Activated naive CD4-positive, alpha-beta T cell treated with anti-CD3 and anti-CD28 coated beads for 36 hours (primary cell): ENCODE measurements at regions of chr1 and their contacts with region 1.

Region 1: GRCh38 chr1:55215256-55216021 is at the start of gene USP24:
- DNase-seq: peak; percentile 81
- H3K4me3 Mint-ChIP-seq: peak within 1 kb of the TSS; percentile 98
- H3K27ac Mint-ChIP-seq: peak within 1 kb of the TSS; percentile 97
- H3K4me1 Mint-ChIP-seq: peaks cover 43% of the 10 kb centered on the region
- H3K27me3 Mint-ChIP-seq: no peaks in the 10 kb centered on the region
- total RNA-seq, gene USP24: 37.1 to 39.7 TPM

Region 2: GRCh38 chr1:54121482-54122134 is 1093.8 kb before region 1 on chr1:
- CTCF ChIA-PET with region 1: no interaction called
- intact Hi-C with region 1: no loop called
- DNase-seq: peak; percentile 81
- H3K4me3 Mint-ChIP-seq: peak overlapping the region; percentile 5
- H3K27ac Mint-ChIP-seq: no peak overlapping the region
- H3K4me1 Mint-ChIP-seq: peaks cover 8% of the 10 kb centered on the region
- H3K27me3 Mint-ChIP-seq: no peaks in the 10 kb centered on the region

Region 3: GRCh38 chr1:55071477-55071876 is 144.0 kb before region 1 on chr1:
- CTCF ChIA-PET with region 1: no interaction called
- intact Hi-C with region 1: loop called (anchors 5 kb)
- DNase-seq: peak; percentile 39
- H3K4me3 Mint-ChIP-seq: no peak overlapping the region
- H3K27ac Mint-ChIP-seq: no peak overlapping the region
- H3K4me1 Mint-ChIP-seq: peaks cover 16% of the 10 kb centered on the region
- H3K27me3 Mint-ChIP-seq: no peaks in the 10 kb centered on the region

Region 4: DNA sequence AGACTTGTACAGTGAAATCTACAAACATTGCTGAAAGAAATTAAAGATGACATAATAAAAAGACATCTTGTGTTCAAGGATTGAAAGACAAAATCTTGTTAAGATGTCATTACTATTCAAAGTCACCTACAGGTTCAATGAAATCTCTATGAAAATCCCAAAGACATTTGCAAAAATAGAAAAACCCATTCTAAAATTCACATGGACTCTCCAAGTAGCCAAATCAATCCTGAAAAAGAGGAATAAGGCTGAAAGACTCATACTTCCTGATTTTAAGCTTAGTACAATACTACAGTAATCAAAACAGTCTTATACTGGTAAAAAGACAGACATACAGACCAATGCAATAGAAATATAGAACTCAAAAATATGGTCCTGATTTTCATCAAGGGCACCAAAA is 97.5 kb before region 1 on chr1:
- CTCF ChIA-PET with region 1: no interaction called
- intact Hi-C with region 1: no loop called
- DNase-seq: no peak
- H3K4me3 Mint-ChIP-seq: no peak overlapping the region
- H3K27ac Mint-ChIP-seq: no peak overlapping the region
- H3K4me1 Mint-ChIP-seq: peaks cover 15% of the 10 kb centered on the region
- H3K27me3 Mint-ChIP-seq: no peaks in the 10 kb centered on the region

Region 5: GRCh38 chr1:55150880-55151588 is 64.4 kb before region 1 on chr1:
- CTCF ChIA-PET with region 1: no interaction called
- intact Hi-C with region 1: loop called (anchors 2 kb)
- DNase-seq: no peak
- H3K4me3 Mint-ChIP-seq: peak overlapping the region; percentile 38
- H3K27ac Mint-ChIP-seq: peak overlapping the region; percentile 92
- H3K4me1 Mint-ChIP-seq: peaks cover 33% of the 10 kb centered on the region
- H3K27me3 Mint-ChIP-seq: no peaks in the 10 kb centered on the region

Region 6: DNA sequence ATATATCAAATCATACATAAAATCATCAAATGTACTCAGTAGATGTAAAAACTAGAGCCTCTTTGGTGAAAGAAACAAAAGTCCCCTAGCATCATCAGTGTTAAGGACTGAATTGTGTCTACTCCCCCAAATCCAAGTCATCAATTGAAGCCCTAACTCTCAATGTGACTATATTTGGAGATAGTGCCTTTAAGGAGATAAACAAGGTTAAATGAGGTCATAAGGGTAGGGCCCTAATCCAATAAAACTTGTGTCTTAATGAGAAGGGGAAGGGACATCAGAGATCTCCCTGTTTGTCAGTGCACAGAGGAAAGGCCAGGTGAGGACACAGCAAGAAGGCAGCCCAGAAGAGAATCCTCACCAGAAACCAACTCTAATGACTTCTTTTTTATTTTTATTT is 33.8 kb before region 1 on chr1:
- CTCF ChIA-PET with region 1: no interaction called
- intact Hi-C with region 1: loop called (anchors 2 kb)
- DNase-seq: no peak
- H3K4me3 Mint-ChIP-seq: no peak overlapping the region
- H3K27ac Mint-ChIP-seq: no peak overlapping the region
- H3K4me1 Mint-ChIP-seq: peaks cover 47% of the 10 kb centered on the region
- H3K27me3 Mint-ChIP-seq: no peaks in the 10 kb centered on the region

Region 7: DNA sequence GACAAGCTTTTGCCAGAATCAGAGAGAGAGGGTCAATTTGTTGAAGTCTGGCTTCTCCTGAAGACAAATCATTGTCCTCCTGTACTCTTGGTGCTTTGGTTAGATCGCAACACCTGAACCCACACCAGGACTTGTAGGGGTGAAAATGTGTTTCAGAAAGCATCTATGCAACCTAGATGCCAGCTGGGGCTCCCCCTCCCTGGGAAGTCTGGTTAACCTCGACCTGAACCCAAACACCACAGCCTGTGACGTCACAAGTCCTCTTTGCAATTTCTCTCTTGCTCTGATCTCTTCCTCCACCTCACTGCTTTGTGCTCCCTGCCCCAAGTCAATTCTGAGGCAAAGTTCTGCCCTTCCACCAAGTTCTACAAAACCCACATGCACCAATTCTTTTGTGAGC is 42.5 kb after region 1 on chr1:
- CTCF ChIA-PET with region 1: no interaction called
- intact Hi-C with region 1: loop called (anchors 2 kb)
- DNase-seq: peak; percentile 79
- H3K4me3 Mint-ChIP-seq: no peak overlapping the region
- H3K27ac Mint-ChIP-seq: no peak overlapping the region
- H3K4me1 Mint-ChIP-seq: peaks cover 19% of the 10 kb centered on the region
- H3K27me3 Mint-ChIP-seq: no peaks in the 10 kb centered on the region